ENCODE measurements at regions of chr14 and their contacts with region 1.

Region 1: DNA sequence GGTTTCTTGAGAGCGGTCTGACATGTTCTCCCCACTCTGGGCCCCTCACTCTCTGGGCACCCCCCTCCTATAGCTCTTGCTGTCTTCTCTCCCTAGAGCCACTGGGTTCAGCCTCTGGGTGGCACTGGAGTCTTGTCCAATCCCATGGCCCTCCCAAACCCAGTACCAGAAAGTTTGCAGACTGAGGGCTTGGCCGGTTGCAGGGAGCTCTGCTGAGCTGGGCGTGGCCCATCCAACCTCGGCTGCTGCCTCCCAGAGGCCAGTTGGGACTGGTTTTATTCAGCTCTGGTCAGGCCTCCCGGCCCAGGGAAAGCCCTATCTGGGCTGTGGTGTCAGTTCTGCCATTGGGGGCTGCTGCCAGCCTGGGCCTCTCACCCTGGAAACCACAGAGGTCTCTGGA is 37.9 kb downstream of the ISCA2 start:
- DNase-seq: peak; percentile 77
- ATAC-seq: peak; percentile 92
- H3K4me3 Mint-ChIP-seq: no peak overlapping the region
- H3K27ac Mint-ChIP-seq: 0 out of 2 replicates have a peak overlapping the region, but pooled peaks have one; percentile 63
- H3K4me1 Mint-ChIP-seq: peaks cover 7% of the 10 kb centered on the region
- H3K27me3 Mint-ChIP-seq: no peaks in the 10 kb centered on the region
- CTCF ChIP-seq: no peak

Region 2: GRCh38 chr14:74501135-74501614 is 30.3 kb before region 1 on chr14:
- CTCF ChIA-PET with region 1: interaction called, 36 read pairs
- POLR2A ChIA-PET with region 1: no interaction called
- DNase-seq: peak; percentile 79
- ATAC-seq: peak; percentile 87
- H3K4me3 Mint-ChIP-seq: no peak overlapping the region
- H3K27ac Mint-ChIP-seq: peak overlapping the region; percentile 91
- H3K4me1 Mint-ChIP-seq: peaks cover 34% of the 10 kb centered on the region
- H3K27me3 Mint-ChIP-seq: no peaks in the 10 kb centered on the region
- CTCF ChIP-seq: 0 out of 2 replicates have a peak, but pooled peaks have one; percentile 29

Region 3: DNA sequence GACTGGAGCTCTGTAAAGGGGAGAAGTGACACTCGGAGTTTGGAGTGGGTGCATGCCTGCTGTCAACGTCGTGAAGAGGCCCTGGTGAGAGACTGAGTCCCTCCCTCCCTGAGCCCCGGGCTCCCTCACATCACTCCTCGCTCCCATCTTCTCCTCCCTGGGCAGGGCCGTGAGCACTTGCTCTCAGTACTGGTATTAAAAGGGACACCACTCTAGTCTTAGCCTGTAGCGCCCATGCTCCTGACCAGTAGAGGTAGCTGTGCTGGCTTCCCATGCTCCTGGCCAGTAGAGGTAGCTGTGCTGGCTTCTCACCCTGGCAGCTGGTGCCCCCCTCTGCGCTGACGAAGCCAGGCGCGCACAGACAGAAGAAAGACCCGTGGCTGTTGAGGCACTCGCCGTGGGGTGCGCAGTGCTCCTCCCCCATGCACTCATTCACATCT is 23.2 kb before region 1 on chr14:
- CTCF ChIA-PET with region 1: interaction called, 37 read pairs
- POLR2A ChIA-PET with region 1: no interaction called
- DNase-seq: peak; percentile 76
- ATAC-seq: peak; percentile 92
- H3K4me3 Mint-ChIP-seq: no peak overlapping the region
- H3K27ac Mint-ChIP-seq: no peak overlapping the region
- H3K4me1 Mint-ChIP-seq: peaks cover 25% of the 10 kb centered on the region
- H3K27me3 Mint-ChIP-seq: peaks cover 8% of the 10 kb centered on the region
- CTCF ChIP-seq: no peak

Region 4: DNA sequence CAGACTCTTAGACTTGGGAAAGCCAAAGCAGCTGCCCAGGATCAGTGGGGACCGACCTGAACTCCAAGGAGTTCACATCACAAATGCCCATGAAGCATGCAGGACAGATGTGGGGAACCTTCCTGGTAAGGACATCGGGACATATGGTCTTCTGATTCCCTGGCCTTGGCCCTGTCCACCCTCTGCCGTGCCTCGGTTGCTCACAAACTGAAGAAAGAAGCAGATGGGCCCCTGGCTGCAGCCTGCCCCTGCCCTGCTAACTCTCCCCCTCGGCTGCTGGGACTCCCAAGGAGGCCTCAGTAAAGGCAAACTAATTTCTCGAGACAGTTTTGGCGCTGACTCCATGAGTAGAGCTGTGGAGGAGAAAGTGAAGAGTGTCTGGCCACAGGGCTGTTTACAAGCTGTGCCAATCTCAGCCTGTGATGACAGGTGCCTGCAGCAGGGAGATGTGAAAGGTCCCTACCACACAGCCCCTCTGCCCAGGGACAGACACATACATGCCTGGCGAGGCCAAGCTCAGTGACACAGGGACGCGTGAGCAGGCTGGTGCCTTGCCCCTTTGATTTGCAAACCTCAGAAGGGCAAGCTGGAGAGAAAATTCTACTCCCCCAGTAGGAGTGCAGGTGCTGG is 10.7 kb after region 1 on chr14:
- CTCF ChIA-PET with region 1: interaction called, 11 read pairs
- POLR2A ChIA-PET with region 1: no interaction called
- DNase-seq: no peak
- ATAC-seq: no peak
- H3K4me3 Mint-ChIP-seq: no peak overlapping the region
- H3K27ac Mint-ChIP-seq: no peak overlapping the region
- H3K4me1 Mint-ChIP-seq: no peaks in the 10 kb centered on the region
- H3K27me3 Mint-ChIP-seq: no peaks in the 10 kb centered on the region
- CTCF ChIP-seq: no peak

Region 5: DNA sequence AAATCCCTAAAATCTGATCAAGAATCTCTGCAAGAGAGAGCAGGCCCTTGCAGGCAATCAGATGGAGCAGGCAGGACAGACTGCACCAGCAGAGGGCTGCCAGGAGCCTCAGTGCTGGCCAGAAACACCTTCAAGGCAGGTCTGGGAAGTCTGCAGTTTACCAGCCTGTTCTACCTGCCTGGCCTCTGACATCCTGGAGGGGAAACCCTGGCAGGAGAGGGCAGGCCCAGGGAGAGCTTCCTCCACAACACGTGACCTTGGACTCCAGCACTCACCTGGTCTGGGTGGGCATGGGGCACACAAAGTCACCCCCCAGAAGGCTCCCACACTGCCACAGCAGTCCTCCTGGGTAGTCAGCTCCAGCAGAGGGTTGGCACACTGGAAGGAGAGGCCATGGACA is 18.1 kb after region 1 on chr14:
- CTCF ChIA-PET with region 1: interaction called, 13 read pairs
- POLR2A ChIA-PET with region 1: no interaction called
- DNase-seq: no peak
- ATAC-seq: peak; percentile 66
- H3K4me3 Mint-ChIP-seq: no peak overlapping the region
- H3K27ac Mint-ChIP-seq: no peak overlapping the region
- H3K4me1 Mint-ChIP-seq: peaks cover 13% of the 10 kb centered on the region
- H3K27me3 Mint-ChIP-seq: no peaks in the 10 kb centered on the region
- CTCF ChIP-seq: no peak